ENCODE measurements at regions of chr11 and their contacts with region 1.

Region 1: GRCh38 chr11:575996-576768 is at the start of gene PHRF1:
- H3K4me3 ChIP-seq: peak within 1 kb of the TSS; percentile 75
- H3K27ac ChIP-seq: peak within 1 kb of the TSS; percentile 94
- H3K4me1 ChIP-seq: peaks cover 5% of the 10 kb centered on the region
- CTCF ChIP-seq: no peak

Region 2: DNA sequence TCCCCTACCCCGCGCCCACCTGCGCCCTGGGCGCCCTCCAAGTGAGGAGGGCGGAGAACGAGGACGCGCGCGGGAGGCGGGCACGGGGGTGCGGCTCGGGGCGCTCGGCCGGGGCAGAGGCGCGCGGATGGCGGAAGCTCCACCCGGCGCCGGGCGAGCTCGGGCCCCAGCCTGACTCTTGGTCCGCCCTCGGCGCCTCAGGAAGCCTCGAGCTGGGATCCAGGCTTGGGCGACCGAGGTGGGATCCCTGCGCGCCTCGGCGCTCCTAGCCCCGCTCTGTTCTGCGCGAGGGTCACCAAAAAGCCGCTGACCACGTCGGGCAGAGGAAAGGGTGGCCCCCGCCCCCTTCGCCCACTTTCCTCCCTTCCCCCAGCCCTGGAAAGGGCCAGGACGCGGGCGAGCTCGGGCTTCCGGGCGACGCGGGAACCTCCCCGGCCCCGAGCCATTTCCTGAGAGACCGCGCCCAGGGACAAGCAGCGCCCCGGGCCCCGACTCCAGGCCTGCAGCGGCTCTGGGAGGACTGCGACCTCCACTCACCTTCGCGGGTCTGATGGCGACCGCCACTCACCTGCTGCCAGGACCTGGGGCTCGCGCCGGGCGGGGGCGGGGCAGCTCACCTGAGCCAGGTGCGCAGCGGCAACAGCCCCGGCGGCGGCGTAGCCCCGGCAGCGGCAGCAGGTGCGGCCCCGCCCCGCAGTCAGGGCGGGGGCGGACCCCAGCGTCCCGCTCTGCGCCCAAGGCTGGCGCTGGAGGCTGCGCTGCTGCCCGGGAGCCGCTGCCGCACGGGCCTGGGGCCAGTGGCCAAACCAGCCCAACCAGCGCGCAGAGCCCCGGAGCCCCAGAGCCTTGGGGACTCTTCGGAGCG is 159.2 kb before region 1 on chr11:
- CTCF ChIA-PET with region 1: no interaction called
- POLR2A ChIA-PET with region 1: no interaction called
- H3K4me3 ChIP-seq: peak overlapping the region; percentile 39
- H3K27ac ChIP-seq: no peak overlapping the region
- H3K4me1 ChIP-seq: no peaks in the 10 kb centered on the region
- CTCF ChIP-seq: no peak

Region 3: GRCh38 chr11:560305-561147 is 15.7 kb before region 1 on chr11 and contains the starts of genes LMNTD2 and RASSF7:
- CTCF ChIA-PET with region 1: no interaction called
- POLR2A ChIA-PET with region 1: interaction called, 28 read pairs
- H3K4me3 ChIP-seq: peak within 1 kb of the TSS; percentile 77
- H3K27ac ChIP-seq: peak within 1 kb of the TSS; percentile 58; the same call in 1 of the 2 replicates
- H3K4me1 ChIP-seq: no peaks in the 10 kb centered on the region
- CTCF ChIP-seq: no peak

Region 4: GRCh38 chr11:587978-588380 is 11.8 kb after region 1 on chr11:
- CTCF ChIA-PET with region 1: interaction called, 3 read pairs
- POLR2A ChIA-PET with region 1: interaction called, 10 read pairs
- H3K4me3 ChIP-seq: no peak overlapping the region
- H3K27ac ChIP-seq: no peak overlapping the region
- H3K4me1 ChIP-seq: no peaks in the 10 kb centered on the region
- CTCF ChIP-seq: no peak

Region 5: GRCh38 chr11:613369-614268 is 37.4 kb after region 1 on chr11:
- CTCF ChIA-PET with region 1: interaction called, 3 read pairs
- POLR2A ChIA-PET with region 1: interaction called, 10 read pairs
- H3K4me3 ChIP-seq: no peak overlapping the region
- H3K27ac ChIP-seq: no peak overlapping the region
- H3K4me1 ChIP-seq: no peaks in the 10 kb centered on the region
- CTCF ChIP-seq: no peak

Measured in HEK293 (cell line).